MCF 10A (cell line): ENCODE measurements at regions of chr3 and their contacts with region 1.

Region 1: GRCh38 chr3:45656575-45657363 is 32.4 kb upstream of the SACM1L start:
- DNase-seq: peak; percentile 97
- H3K4me3 Mint-ChIP-seq: no peak overlapping the region
- H3K27ac Mint-ChIP-seq: peak overlapping the region; percentile 19
- H3K4me1 Mint-ChIP-seq: peaks cover 19% of the 10 kb centered on the region
- H3K27me3 Mint-ChIP-seq: no peaks in the 10 kb centered on the region
- CTCF ChIP-seq: peak; percentile 92

Region 2: GRCh38 chr3:45037734-45038455 is 618.9 kb before region 1 on chr3:
- CTCF ChIA-PET with region 1: interaction called, 13 read pairs
- POLR2A ChIA-PET with region 1: no interaction called
- intact Hi-C with region 1: loop called (anchors 1 kb)
- DNase-seq: peak; percentile 97
- H3K4me3 Mint-ChIP-seq: no peak overlapping the region
- H3K27ac Mint-ChIP-seq: no peak overlapping the region
- H3K4me1 Mint-ChIP-seq: peaks cover 4% of the 10 kb centered on the region
- H3K27me3 Mint-ChIP-seq: no peaks in the 10 kb centered on the region
- CTCF ChIP-seq: peak; percentile 82

Region 3: DNA sequence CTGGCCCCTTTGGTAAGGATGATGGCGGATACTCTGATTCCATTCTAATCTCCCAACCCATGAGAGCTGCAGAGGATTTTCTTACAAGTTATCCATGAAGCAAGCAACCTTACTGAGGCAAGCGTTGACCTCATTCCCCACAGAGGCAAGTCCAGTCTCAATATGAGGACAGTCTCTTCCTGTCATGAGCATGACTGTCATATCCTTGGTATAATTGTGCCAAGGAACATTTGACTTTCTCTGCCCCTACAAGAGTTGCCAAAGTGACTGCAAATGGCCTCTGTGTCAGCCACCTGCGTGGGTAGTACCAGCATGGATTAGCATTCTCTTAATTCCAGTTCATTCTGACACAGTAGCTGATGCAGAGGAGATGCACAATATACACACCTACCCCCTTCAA is 359.4 kb before region 1 on chr3:
- CTCF ChIA-PET with region 1: no interaction called
- POLR2A ChIA-PET with region 1: no interaction called
- intact Hi-C with region 1: no loop called
- DNase-seq: no peak
- H3K4me3 Mint-ChIP-seq: no peak overlapping the region
- H3K27ac Mint-ChIP-seq: no peak overlapping the region
- H3K4me1 Mint-ChIP-seq: no peaks in the 10 kb centered on the region
- H3K27me3 Mint-ChIP-seq: peaks cover 56% of the 10 kb centered on the region
- CTCF ChIP-seq: no peak

Region 4: GRCh38 chr3:45516829-45517228 is 139.9 kb before region 1 on chr3:
- CTCF ChIA-PET with region 1: interaction called, 57 read pairs
- POLR2A ChIA-PET with region 1: interaction called, 4 read pairs
- intact Hi-C with region 1: no loop called
- DNase-seq: no peak
- H3K4me3 Mint-ChIP-seq: no peak overlapping the region
- H3K27ac Mint-ChIP-seq: no peak overlapping the region
- H3K4me1 Mint-ChIP-seq: no peaks in the 10 kb centered on the region
- H3K27me3 Mint-ChIP-seq: no peaks in the 10 kb centered on the region
- CTCF ChIP-seq: no peak

Region 5: GRCh38 chr3:45551214-45552010 is 105.4 kb before region 1 on chr3:
- CTCF ChIA-PET with region 1: interaction called, 5 read pairs
- POLR2A ChIA-PET with region 1: interaction called, 3 read pairs
- intact Hi-C with region 1: loop called (anchors 1 kb)
- DNase-seq: peak; percentile 94
- H3K4me3 Mint-ChIP-seq: peak overlapping the region; percentile 6
- H3K27ac Mint-ChIP-seq: peak overlapping the region; percentile 57
- H3K4me1 Mint-ChIP-seq: peaks cover 56% of the 10 kb centered on the region
- H3K27me3 Mint-ChIP-seq: no peaks in the 10 kb centered on the region
- CTCF ChIP-seq: no peak

Region 6: GRCh38 chr3:45593708-45594609 is 62.8 kb before region 1 on chr3:
- CTCF ChIA-PET with region 1: interaction called, 14 read pairs
- POLR2A ChIA-PET with region 1: interaction called, 5 read pairs
- intact Hi-C with region 1: loop called (anchors 1 kb)
- DNase-seq: peak; percentile 75
- H3K4me3 Mint-ChIP-seq: peak overlapping the region; percentile 78
- H3K27ac Mint-ChIP-seq: peak overlapping the region; percentile 76
- H3K4me1 Mint-ChIP-seq: peaks cover 20% of the 10 kb centered on the region
- H3K27me3 Mint-ChIP-seq: no peaks in the 10 kb centered on the region
- CTCF ChIP-seq: no peak

Region 7: DNA sequence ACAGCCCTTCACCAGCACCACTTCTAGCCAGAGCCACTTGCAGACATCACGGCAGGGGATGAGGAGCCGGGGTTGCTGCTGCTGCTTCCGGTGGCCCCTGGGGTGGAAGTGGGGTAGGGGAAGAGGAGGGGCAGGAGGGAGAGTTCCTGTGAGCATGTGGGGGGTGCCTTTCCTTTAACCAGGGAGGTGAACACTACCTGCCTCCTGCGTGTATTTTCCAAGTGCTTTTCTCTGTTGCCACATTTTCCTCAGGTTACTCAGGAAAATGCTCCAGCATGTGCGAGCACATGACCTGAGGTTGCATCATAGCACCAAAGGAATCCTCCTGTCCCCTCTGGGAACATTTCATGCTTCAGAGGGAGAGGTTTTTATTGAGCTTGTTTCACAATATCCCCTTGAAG is 20.3 kb after region 1 on chr3:
- CTCF ChIA-PET with region 1: interaction called, 16 read pairs
- POLR2A ChIA-PET with region 1: interaction called, 6 read pairs
- intact Hi-C with region 1: no loop called
- DNase-seq: peak; percentile 92
- H3K4me3 Mint-ChIP-seq: peak overlapping the region; percentile 50
- H3K27ac Mint-ChIP-seq: peak overlapping the region; percentile 83
- H3K4me1 Mint-ChIP-seq: peaks cover 18% of the 10 kb centered on the region
- H3K27me3 Mint-ChIP-seq: no peaks in the 10 kb centered on the region
- CTCF ChIP-seq: no peak

Region 8: GRCh38 chr3:46656778-46657556 is 1000.2 kb after region 1 on chr3:
- CTCF ChIA-PET with region 1: no interaction called
- POLR2A ChIA-PET with region 1: no interaction called
- intact Hi-C with region 1: no loop called
- DNase-seq: no peak
- H3K4me3 Mint-ChIP-seq: no peak overlapping the region
- H3K27ac Mint-ChIP-seq: no peak overlapping the region
- H3K4me1 Mint-ChIP-seq: peaks cover 16% of the 10 kb centered on the region
- H3K27me3 Mint-ChIP-seq: peaks cover 14% of the 10 kb centered on the region
- CTCF ChIP-seq: no peak